ENCODE measurements at regions of chr3 and their contacts with region 1.

Region 1: GRCh38 chr3:16516695-16517481 is 3.4 kb upstream of the RFTN1 start:
- DNase-seq: no peak
- ATAC-seq: no peak
- H3K4me3 Mint-ChIP-seq: peak overlapping the region; percentile 97
- H3K27ac Mint-ChIP-seq: peak overlapping the region; percentile 77
- H3K4me1 Mint-ChIP-seq: peaks cover 87% of the 10 kb centered on the region
- H3K27me3 Mint-ChIP-seq: no peaks in the 10 kb centered on the region
- CTCF ChIP-seq: no peak

Region 2: GRCh38 chr3:16370872-16371740 is 145.8 kb before region 1 on chr3:
- CTCF ChIA-PET with region 1: interaction called, 4 read pairs
- POLR2A ChIA-PET with region 1: interaction called, 202 read pairs
- intact Hi-C with region 1: loop called (anchors 1 kb)
- DNase-seq: peak; percentile 32
- ATAC-seq: peak; percentile 59
- H3K4me3 Mint-ChIP-seq: peak overlapping the region; percentile 75
- H3K27ac Mint-ChIP-seq: peak overlapping the region; percentile 93
- H3K4me1 Mint-ChIP-seq: peaks cover 95% of the 10 kb centered on the region
- H3K27me3 Mint-ChIP-seq: no peaks in the 10 kb centered on the region
- CTCF ChIP-seq: no peak

Region 3: DNA sequence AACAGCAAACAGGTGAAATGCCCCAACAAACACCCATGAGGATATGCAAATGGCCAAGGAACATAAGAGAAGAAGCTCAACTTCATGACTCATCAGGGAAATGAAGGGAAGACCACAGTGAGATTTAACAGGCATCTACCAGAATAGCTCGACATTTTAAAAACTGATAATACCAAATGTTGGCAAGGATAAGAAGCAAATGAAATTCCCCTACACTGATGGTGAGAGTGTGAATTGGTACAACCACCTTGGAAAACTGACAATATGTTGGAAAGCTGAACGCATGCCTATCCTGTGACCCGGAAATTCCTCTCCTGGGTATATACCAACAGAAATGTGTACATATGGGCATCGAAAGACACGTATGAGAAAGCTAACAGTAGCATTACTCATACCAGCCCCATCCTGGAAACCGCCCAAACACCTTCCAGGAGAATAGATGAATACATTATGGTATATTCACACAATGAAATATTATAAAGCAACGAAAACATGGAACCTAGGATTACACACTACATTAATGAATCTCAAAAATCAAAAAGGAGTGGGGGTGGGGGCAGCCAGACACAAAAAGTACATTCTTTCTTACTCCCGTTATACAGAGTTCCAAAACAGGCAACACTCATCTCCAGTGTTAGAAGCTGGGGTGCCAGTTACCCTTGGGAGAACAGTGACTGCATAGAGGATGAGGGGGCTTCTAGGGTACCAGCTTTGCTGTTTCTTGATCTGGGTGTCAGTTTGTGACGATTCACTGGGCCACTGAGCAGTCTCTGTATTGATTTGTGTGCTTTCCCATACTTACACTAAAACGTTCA is 20.3 kb before region 1 on chr3:
- CTCF ChIA-PET with region 1: interaction called, 3 read pairs
- POLR2A ChIA-PET with region 1: interaction called, 135 read pairs
- intact Hi-C with region 1: no loop called
- DNase-seq: no peak
- ATAC-seq: peak; percentile 79
- H3K4me3 Mint-ChIP-seq: peak overlapping the region; percentile 59
- H3K27ac Mint-ChIP-seq: peak overlapping the region; percentile 38
- H3K4me1 Mint-ChIP-seq: peaks cover 66% of the 10 kb centered on the region
- H3K27me3 Mint-ChIP-seq: no peaks in the 10 kb centered on the region
- CTCF ChIP-seq: no peak

Region 4: DNA sequence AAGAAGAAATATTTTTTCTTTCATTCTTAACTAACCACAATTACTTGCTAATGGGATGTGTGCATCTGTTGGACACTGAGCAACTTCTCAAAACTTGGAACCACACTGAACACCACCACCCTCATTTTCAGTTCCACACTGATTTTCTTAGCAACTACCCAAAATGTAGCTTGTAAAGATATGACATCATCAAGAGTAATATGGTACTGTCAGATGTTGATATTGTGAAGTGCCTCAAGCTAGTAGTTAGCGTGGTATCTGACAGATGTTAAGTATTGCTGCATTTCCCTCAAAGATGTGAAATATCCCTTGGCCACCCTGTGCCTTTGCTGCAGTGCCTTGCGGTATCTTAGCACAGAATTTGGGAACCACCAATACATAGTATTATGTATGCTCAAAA is 12.6 kb before region 1 on chr3:
- CTCF ChIA-PET with region 1: no interaction called
- POLR2A ChIA-PET with region 1: interaction called, 137 read pairs
- intact Hi-C with region 1: no loop called
- DNase-seq: no peak
- ATAC-seq: peak; percentile 61
- H3K4me3 Mint-ChIP-seq: peak overlapping the region; percentile 50
- H3K27ac Mint-ChIP-seq: peak overlapping the region; percentile 41
- H3K4me1 Mint-ChIP-seq: peaks cover 86% of the 10 kb centered on the region
- H3K27me3 Mint-ChIP-seq: no peaks in the 10 kb centered on the region
- CTCF ChIP-seq: no peak

Region 5: GRCh38 chr3:18444595-18445400 is 1927.9 kb after region 1 on chr3:
- CTCF ChIA-PET with region 1: no interaction called
- POLR2A ChIA-PET with region 1: no interaction called
- intact Hi-C with region 1: no loop called
- DNase-seq: peak; percentile 82
- ATAC-seq: peak; percentile 81
- H3K4me3 Mint-ChIP-seq: peak overlapping the region; percentile 93
- H3K27ac Mint-ChIP-seq: peak overlapping the region; percentile 91
- H3K4me1 Mint-ChIP-seq: peaks cover 55% of the 10 kb centered on the region
- H3K27me3 Mint-ChIP-seq: peaks cover 5% of the 10 kb centered on the region
- CTCF ChIP-seq: no peak